Activated CD4-positive, alpha-beta memory T cell treated with anti-CD3 and anti-CD28 coated beads for 36 hours (primary cell): ENCODE measurements at regions of chr7 and their contacts with region 1.

Region 1: GRCh38 chr7:100691676-100692577 is 2.1 kb downstream of the GIGYF1 start:
- DNase-seq: peak; percentile 88
- H3K4me3 Mint-ChIP-seq: peak overlapping the region; percentile 93
- H3K27ac Mint-ChIP-seq: no peak overlapping the region
- H3K4me1 Mint-ChIP-seq: peaks cover 37% of the 10 kb centered on the region
- H3K27me3 Mint-ChIP-seq: no peaks in the 10 kb centered on the region

Region 2: DNA sequence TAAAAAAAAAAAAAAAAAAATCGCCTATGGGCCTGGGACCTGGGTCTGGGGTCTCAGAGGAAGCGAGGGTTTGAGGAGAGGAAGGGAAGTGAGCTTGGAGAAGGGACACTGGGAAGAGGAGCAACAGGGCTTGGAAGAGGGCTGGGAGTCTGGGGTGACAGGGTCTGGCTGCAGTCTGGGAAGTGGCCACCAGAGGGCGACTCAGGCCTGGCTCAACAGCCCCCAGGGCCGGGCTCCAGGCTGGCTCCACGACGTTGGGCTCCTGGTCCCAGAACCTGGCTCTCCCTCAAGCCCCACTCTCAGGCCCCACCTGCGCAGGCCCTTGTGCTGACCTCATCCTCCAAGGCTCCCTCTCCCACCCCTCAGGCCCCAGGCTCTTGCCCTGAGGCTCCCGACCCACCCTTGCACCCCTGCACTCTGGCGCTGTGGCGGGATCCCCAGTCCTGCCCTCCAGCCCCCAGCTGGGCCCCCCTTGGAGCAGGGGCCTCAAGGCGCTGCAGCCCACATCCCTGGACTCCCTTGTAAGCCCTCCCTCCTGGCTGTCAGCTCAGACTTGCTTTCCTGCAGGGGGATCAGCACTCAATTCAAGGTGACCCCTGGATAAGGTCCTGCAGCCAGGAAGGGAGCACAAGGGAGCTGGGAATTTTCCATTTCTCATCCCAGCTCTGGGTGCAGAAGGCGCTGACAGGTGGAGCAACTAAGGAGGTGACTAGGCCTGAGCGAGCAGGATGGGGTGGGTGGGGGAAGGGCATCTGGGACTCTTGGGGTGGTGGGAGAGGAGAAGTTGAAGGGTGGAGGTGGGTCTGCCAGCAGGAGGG is 222.5 kb before region 1 on chr7:
- CTCF ChIA-PET with region 1: interaction called, 14 read pairs
- POLR2A ChIA-PET with region 1: no interaction called
- intact Hi-C with region 1: no loop called
- DNase-seq: peak; percentile 88
- H3K4me3 Mint-ChIP-seq: no peak overlapping the region
- H3K27ac Mint-ChIP-seq: peak overlapping the region; percentile 45
- H3K4me1 Mint-ChIP-seq: peaks cover 27% of the 10 kb centered on the region
- H3K27me3 Mint-ChIP-seq: no peaks in the 10 kb centered on the region

Region 3: DNA sequence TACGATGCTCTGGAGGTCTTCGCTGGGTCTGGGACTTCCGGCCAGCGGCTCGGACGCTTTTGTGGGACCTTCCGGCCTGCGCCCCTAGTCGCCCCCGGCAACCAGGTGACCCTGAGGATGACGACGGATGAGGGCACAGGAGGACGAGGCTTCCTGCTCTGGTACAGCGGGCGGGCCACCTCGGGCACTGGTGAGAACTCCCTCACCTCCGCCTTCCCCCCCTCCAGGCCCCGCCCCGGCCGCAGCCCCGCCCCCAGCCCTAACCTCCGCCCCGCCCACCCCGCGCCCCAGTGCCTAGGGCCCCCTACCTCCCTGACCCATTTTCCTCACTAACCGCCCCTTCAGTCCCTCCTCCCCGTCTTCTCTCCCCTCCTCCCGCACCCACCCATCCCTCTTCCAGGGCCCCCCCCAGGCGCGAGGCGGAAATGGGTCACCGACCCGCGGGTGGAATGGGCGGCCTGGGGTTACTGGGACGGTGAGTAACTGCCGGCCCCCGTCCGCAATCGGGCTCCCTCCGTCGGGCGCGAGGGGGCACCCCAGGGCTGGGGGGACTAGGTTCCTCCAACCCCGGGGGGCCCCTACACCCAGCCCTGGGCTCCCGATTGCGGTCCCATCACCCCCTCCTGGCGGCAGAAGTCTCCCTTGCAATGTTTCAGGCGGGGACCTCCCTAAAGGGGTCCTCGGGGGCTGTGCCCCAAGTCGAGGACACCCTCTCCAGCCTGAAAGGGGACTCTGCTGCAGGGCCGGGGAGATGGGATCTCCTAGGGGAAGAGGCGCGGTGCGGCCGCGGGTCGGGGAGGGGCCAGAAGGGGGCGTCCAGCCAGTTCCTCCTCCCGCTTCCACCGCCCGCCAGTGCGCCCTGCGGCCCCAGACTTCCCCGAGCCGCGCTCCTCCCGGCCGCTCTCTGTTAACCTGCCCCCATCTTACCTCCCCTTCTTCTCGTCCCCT is 87.6 kb before region 1 on chr7:
- CTCF ChIA-PET with region 1: interaction called, 4 read pairs
- POLR2A ChIA-PET with region 1: no interaction called
- intact Hi-C with region 1: loop called (anchors 2 kb)
- DNase-seq: peak; percentile 85
- H3K4me3 Mint-ChIP-seq: peak overlapping the region; percentile 80
- H3K27ac Mint-ChIP-seq: peak overlapping the region; percentile 52
- H3K4me1 Mint-ChIP-seq: peaks cover 18% of the 10 kb centered on the region
- H3K27me3 Mint-ChIP-seq: no peaks in the 10 kb centered on the region

Region 4: DNA sequence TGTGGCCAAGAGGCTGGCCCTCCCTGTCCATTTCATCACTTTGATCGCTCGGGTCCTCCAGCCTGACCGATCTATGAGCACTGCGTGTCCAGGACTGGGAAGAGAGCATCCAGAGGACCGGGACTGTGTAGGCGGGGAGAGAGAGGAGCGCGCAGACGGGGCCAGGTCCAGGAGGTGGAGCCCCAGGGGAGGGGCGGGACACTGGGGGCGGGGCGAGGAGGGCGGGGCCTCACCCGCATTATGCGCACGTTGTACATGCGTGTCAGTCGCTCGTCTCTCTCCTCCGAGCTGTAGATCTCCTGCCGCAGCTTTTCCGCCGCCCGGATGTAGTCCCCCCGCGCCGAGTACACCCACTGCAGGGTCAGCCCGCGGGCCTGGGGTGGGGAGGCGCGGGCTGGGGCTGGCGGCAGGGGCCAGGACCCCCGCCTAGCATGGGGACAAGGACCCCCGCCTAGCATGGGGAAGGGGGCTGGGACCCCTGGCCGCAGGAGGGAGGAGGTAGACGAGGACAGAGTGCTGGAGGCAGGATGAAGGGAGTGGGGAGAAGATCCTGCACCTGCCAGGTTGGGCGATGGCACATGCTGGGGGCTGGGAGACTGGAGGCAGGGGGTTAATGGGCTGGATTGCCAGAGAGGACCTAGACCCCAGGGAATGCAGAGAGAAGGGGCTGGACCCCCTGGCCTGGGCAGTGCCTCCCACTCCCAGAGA is 65.2 kb before region 1 on chr7:
- CTCF ChIA-PET with region 1: interaction called, 27 read pairs
- POLR2A ChIA-PET with region 1: interaction called, 4 read pairs
- intact Hi-C with region 1: loop called (anchors 5 kb)
- DNase-seq: peak; percentile 96
- H3K4me3 Mint-ChIP-seq: peak overlapping the region; percentile 65
- H3K27ac Mint-ChIP-seq: peak overlapping the region; percentile 38
- H3K4me1 Mint-ChIP-seq: peaks cover 12% of the 10 kb centered on the region
- H3K27me3 Mint-ChIP-seq: no peaks in the 10 kb centered on the region

Region 5: GRCh38 chr7:100673300-100673941 is 18.5 kb before region 1 on chr7 and contains the start of gene GNB2:
- CTCF ChIA-PET with region 1: interaction called, 61 read pairs
- POLR2A ChIA-PET with region 1: interaction called, 3 read pairs
- intact Hi-C with region 1: loop called (anchors 2 kb)
- DNase-seq: peak; percentile 100
- H3K4me3 Mint-ChIP-seq: peak within 1 kb of the TSS; percentile 95
- H3K27ac Mint-ChIP-seq: peak within 1 kb of the TSS; percentile 97
- H3K4me1 Mint-ChIP-seq: peaks cover 8% of the 10 kb centered on the region
- H3K27me3 Mint-ChIP-seq: no peaks in the 10 kb centered on the region
- total RNA-seq, gene GNB2: 228 to 231 TPM

Region 6: GRCh38 chr7:101066141-101066832 is 374.4 kb after region 1 on chr7:
- CTCF ChIA-PET with region 1: no interaction called
- POLR2A ChIA-PET with region 1: no interaction called
- intact Hi-C with region 1: no loop called
- DNase-seq: no peak
- H3K4me3 Mint-ChIP-seq: no peak overlapping the region
- H3K27ac Mint-ChIP-seq: no peak overlapping the region
- H3K4me1 Mint-ChIP-seq: no peaks in the 10 kb centered on the region
- H3K27me3 Mint-ChIP-seq: peaks cover 28% of the 10 kb centered on the region